Caco-2 (cell line): ENCODE measurements at regions of chr17 and their contacts with region 1.

Region 1: GRCh38 chr17:31373150-31374093 is 18.1 kb upstream of the RAB11FIP4 start:
- DNase-seq: peak in 1 of 2 experiments; percentile 53
- H3K4me3 ChIP-seq: no peak overlapping the region
- H3K4me3 Mint-ChIP-seq: no peak overlapping the region
- H3K27ac Mint-ChIP-seq: no peak overlapping the region
- H3K4me1 ChIP-seq: no peaks in the 10 kb centered on the region
- H3K4me1 Mint-ChIP-seq: no peaks in the 10 kb centered on the region
- H3K27me3 ChIP-seq: no peaks in the 10 kb centered on the region
- H3K27me3 Mint-ChIP-seq: no peaks in the 10 kb centered on the region
- CTCF ChIP-seq: peak; percentile 61 to 63

Region 2: GRCh38 chr17:31013844-31014243 is 359.6 kb before region 1 on chr17:
- CTCF ChIA-PET with region 1: no interaction called
- POLR2A ChIA-PET with region 1: no interaction called
- intact Hi-C with region 1: loop called (anchors 2 kb)
- DNase-seq: no peak
- H3K4me3 ChIP-seq: no peak overlapping the region
- H3K4me3 Mint-ChIP-seq: no peak overlapping the region
- H3K27ac Mint-ChIP-seq: no peak overlapping the region
- H3K4me1 ChIP-seq: no peaks in the 10 kb centered on the region
- H3K4me1 Mint-ChIP-seq: no peaks in the 10 kb centered on the region
- H3K27me3 ChIP-seq: no peaks in the 10 kb centered on the region
- H3K27me3 Mint-ChIP-seq: no peaks in the 10 kb centered on the region
- CTCF ChIP-seq: no peak

Region 3: GRCh38 chr17:31231852-31232251 is 141.6 kb before region 1 on chr17:
- CTCF ChIA-PET with region 1: no interaction called
- POLR2A ChIA-PET with region 1: no interaction called
- intact Hi-C with region 1: loop called (anchors 10 kb)
- DNase-seq: no peak
- H3K4me3 ChIP-seq: no peak overlapping the region
- H3K4me3 Mint-ChIP-seq: no peak overlapping the region
- H3K27ac Mint-ChIP-seq: no peak overlapping the region
- H3K4me1 ChIP-seq: no peaks in the 10 kb centered on the region
- H3K4me1 Mint-ChIP-seq: no peaks in the 10 kb centered on the region
- H3K27me3 ChIP-seq: no peaks in the 10 kb centered on the region
- H3K27me3 Mint-ChIP-seq: no peaks in the 10 kb centered on the region
- CTCF ChIP-seq: no peak

Region 4: DNA sequence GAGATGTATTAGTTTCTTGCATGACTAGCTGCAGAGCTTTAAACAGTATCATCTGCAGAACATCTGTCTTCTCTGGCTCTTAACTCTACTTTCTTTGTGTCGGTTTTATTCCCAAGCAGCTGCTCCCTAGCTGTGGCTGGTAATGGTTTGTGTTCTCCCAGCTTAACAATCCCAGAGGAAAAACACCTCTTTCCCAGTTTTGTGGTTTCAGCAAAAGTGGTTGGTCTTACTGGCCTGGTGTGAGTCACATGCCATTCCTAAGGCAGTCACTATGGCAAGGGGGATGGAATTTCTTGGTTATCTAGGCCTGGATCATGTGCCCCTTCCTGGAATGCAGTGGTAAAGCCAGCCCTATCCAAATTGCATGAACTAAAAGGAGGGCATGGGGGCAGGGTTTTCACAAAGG is 103.8 kb before region 1 on chr17:
- CTCF ChIA-PET with region 1: no interaction called
- POLR2A ChIA-PET with region 1: no interaction called
- intact Hi-C with region 1: loop called (anchors 10 kb)
- DNase-seq: peak; percentile 53 to 62
- H3K4me3 ChIP-seq: no peak overlapping the region
- H3K4me3 Mint-ChIP-seq: no peak overlapping the region
- H3K27ac Mint-ChIP-seq: peak overlapping the region; percentile 51
- H3K4me1 ChIP-seq: peaks cover 15% of the 10 kb centered on the region
- H3K4me1 Mint-ChIP-seq: peaks cover 12% of the 10 kb centered on the region
- H3K27me3 ChIP-seq: no peaks in the 10 kb centered on the region
- H3K27me3 Mint-ChIP-seq: no peaks in the 10 kb centered on the region
- CTCF ChIP-seq: no peak